ENCODE measurements at regions of chr4 and their contacts with region 1.

Region 1: GRCh38 chr4:74157561-74158465 is at the start of gene MTHFD2L:
- DNase-seq: peak; percentile 87
- ATAC-seq: peak; percentile 97
- H3K4me3 ChIP-seq: peak within 1 kb of the TSS; percentile 66 to 84 (median 71)
- H3K4me3 Mint-ChIP-seq: peak within 1 kb of the TSS; percentile 97
- H3K27ac ChIP-seq: peak within 1 kb of the TSS; percentile 67 to 75
- H3K27ac Mint-ChIP-seq: peak within 1 kb of the TSS; percentile 92
- H3K4me1 ChIP-seq: peaks cover 11 to 13% of the 10 kb centered on the region in 2 donors
- H3K4me1 Mint-ChIP-seq: peaks cover 21% of the 10 kb centered on the region
- H3K27me3 ChIP-seq: peaks cover 0 to 9% (median 1%) of the 10 kb centered on the region in 4 experiments
- H3K27me3 Mint-ChIP-seq: peaks cover 11% of the 10 kb centered on the region
- CTCF ChIP-seq: no peak
- total RNA-seq, gene MTHFD2L: 12.6 and 13.3 TPM in 2 replicates

Region 2: DNA sequence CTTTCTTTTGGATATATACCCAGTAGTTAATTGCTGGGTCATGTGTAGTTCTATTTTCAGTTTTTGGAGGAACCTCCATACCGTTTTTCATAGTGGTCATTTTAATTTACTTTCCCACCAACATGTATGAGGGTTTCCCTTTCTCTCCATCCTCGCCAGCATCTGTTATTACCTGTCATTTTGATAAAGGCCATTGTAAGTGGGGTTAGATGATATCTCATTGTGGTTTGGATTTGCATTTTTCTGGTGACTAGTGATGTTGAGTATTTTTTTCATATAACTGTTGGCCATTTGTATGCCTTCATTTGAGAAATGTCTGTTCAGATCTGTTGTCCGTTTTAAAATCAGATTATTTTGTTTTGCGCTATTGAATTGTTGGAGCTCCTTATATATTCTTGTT is 30.1 kb before region 1 on chr4:
- CTCF ChIA-PET with region 1: no interaction called
- POLR2A ChIA-PET with region 1: no interaction called
- intact Hi-C with region 1: no loop called
- DNase-seq: no peak
- ATAC-seq: no peak
- H3K4me3 ChIP-seq: no peak overlapping the region
- H3K4me3 Mint-ChIP-seq: no peak overlapping the region
- H3K27ac ChIP-seq: no peak overlapping the region
- H3K27ac Mint-ChIP-seq: no peak overlapping the region
- H3K4me1 ChIP-seq: no peaks in the 10 kb centered on the region
- H3K4me1 Mint-ChIP-seq: no peaks in the 10 kb centered on the region
- H3K27me3 ChIP-seq: no peaks in the 10 kb centered on the region
- H3K27me3 Mint-ChIP-seq: peaks cover 10% of the 10 kb centered on the region
- CTCF ChIP-seq: no peak

Region 3: DNA sequence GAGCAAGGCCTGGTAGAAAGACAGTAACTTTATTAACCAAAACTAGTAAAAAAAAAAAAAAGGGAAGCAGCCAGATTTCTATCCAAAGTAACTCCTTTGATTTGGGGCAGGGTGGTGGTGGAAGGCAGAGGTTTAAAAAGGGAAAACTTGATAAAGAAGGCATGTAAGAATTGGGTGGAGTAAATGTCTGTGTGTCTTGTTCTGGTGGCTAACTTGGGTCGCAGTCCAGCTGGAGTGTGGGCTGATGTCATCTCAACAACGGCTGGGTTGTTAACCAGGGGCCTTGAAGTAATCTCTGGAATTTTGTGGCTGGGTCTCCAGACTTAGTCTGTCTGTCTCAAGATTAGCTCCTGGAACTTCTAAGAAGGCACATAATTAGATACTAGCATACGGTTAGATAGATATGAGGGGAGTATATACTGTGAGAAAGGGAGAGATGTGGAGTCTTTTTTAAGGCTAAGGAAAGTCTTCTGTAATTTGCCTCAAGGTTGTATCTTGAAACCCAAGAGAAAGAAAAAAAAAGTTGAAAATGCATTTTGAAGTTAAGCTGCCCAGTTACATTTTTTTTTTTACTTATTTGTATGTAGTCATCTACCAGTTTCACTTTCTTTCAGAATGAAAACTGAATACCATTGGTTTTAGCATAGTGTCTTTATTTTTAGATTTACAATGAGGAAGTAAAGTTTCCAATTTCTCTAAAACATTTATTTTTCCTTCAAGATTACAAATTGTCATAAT is 48.4 kb after region 1 on chr4:
- CTCF ChIA-PET with region 1: interaction called, 3 read pairs
- POLR2A ChIA-PET with region 1: no interaction called
- intact Hi-C with region 1: loop called (anchors 1 kb)
- DNase-seq: peak; percentile 61
- ATAC-seq: peak; percentile 73
- H3K4me3 ChIP-seq: peak overlapping the region; percentile 20 to 58 (median 35)
- H3K4me3 Mint-ChIP-seq: peak overlapping the region; percentile 84
- H3K27ac ChIP-seq: peak overlapping the region; percentile 86 to 96
- H3K27ac Mint-ChIP-seq: peak overlapping the region; percentile 96
- H3K4me1 ChIP-seq: peaks cover 20 to 21% of the 10 kb centered on the region in 2 donors
- H3K4me1 Mint-ChIP-seq: peaks cover 30% of the 10 kb centered on the region
- H3K27me3 ChIP-seq: no peaks in the 10 kb centered on the region
- H3K27me3 Mint-ChIP-seq: no peaks in the 10 kb centered on the region
- CTCF ChIP-seq: no peak

Region 4: GRCh38 chr4:74320559-74321118 is 162.8 kb after region 1 on chr4:
- CTCF ChIA-PET with region 1: no interaction called
- POLR2A ChIA-PET with region 1: no interaction called
- intact Hi-C with region 1: no loop called
- DNase-seq: peak; percentile 31
- ATAC-seq: peak; percentile 24
- H3K4me3 ChIP-seq: no peak overlapping the region
- H3K4me3 Mint-ChIP-seq: no peak overlapping the region
- H3K27ac ChIP-seq: no peak overlapping the region
- H3K27ac Mint-ChIP-seq: no peak overlapping the region
- H3K4me1 ChIP-seq: no peaks in the 10 kb centered on the region
- H3K4me1 Mint-ChIP-seq: no peaks in the 10 kb centered on the region
- H3K27me3 ChIP-seq: peaks cover 0 to 10% (median 4%) of the 10 kb centered on the region in 4 experiments
- H3K27me3 Mint-ChIP-seq: peaks cover 26% of the 10 kb centered on the region
- CTCF ChIP-seq: peak; percentile 31

Region 5: GRCh38 chr4:75514131-75514948 is 1356.5 kb after region 1 on chr4 and contains the starts of genes RCHY1 and THAP6:
- CTCF ChIA-PET with region 1: no interaction called
- POLR2A ChIA-PET with region 1: no interaction called
- intact Hi-C with region 1: loop called (anchors 2 kb)
- DNase-seq: peak; percentile 96
- ATAC-seq: peak; percentile 87
- H3K4me3 ChIP-seq: peak within 1 kb of the TSS; percentile 76 to 94 (median 85)
- H3K4me3 Mint-ChIP-seq: no peak within 1 kb of the TSS
- H3K27ac ChIP-seq: peak within 1 kb of the TSS; percentile 93 to 96
- H3K27ac Mint-ChIP-seq: peak within 1 kb of the TSS; percentile 97
- H3K4me1 ChIP-seq: peaks cover 29 to 32% of the 10 kb centered on the region in 2 donors
- H3K4me1 Mint-ChIP-seq: peaks cover 36% of the 10 kb centered on the region
- H3K27me3 ChIP-seq: no peaks in the 10 kb centered on the region
- H3K27me3 Mint-ChIP-seq: no peaks in the 10 kb centered on the region
- CTCF ChIP-seq: peak; percentile 7
- total RNA-seq, gene RCHY1: 33.3 and 34.5 TPM in 2 replicates
- total RNA-seq, gene THAP6: 34.5 and 38.3 TPM in 2 replicates

Measured in B cell (primary cell).